Endothelial cell of umbilical vein (primary cell): ENCODE measurements at regions of chr3 and their contacts with region 1.

Region 1: GRCh38 chr3:157572559-157573270 is 69.5 kb upstream of the VEPH1 start:
- DNase-seq: peak; percentile 83
- H3K4me3 ChIP-seq: no peak overlapping the region
- H3K27ac ChIP-seq: no peak overlapping the region
- H3K4me1 ChIP-seq: no peaks in the 10 kb centered on the region
- H3K27me3 ChIP-seq: no peaks in the 10 kb centered on the region
- CTCF ChIP-seq: peak; percentile 71 to 75
- POLR2A ChIP-seq: no peak

Region 2: DNA sequence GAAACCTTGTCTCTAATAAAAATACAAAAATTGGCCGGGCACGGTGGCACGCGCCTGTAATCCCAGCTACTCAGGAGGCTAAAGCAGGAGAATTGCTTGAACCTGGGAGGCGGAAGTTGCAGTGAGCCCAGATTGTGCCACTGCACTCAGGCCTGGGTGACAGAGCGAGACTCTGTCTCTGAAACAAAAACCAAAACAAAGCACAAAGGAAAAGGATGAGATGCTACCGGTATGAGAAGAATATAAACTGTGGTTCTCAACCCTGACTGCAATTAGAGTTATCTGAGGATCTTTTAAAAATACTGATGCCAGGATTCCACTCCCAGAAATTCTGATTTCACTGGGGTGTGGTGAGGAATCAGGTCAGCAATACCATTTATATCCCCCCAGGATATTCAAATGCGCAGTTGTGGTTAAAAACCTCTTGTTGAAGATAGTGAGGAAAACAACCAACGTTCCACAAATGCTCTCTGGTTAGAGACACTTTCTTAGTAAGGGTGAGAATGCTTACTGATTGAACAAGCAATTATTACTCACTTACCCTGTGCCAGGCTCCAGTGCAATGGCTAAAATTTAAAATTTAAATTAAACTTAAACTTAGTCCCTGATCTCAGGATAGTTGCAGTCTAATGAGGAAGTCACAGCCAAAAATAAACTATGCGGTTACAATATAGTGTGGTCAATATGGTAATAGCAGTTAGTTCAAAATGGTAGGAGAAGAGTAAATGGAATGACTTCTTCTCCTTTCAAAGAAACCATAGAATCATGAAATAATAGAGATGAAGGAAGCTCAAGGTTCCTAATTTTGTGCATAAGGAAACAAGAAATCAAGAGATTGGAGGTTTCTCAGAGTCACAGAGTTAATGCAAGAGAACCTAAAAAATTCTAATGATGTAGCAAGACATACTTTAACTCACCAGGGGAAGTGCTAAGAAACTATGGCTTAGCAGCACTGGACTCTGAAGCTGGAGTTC is 1127.3 kb before region 1 on chr3:
- CTCF ChIA-PET with region 1: no interaction called
- POLR2A ChIA-PET with region 1: no interaction called
- dilution Hi-C with region 1: no loop called
- intact Hi-C with region 1: no loop called
- DNase-seq: no peak
- H3K4me3 ChIP-seq: no peak overlapping the region
- H3K27ac ChIP-seq: no peak overlapping the region
- H3K4me1 ChIP-seq: peaks cover 8% of the 10 kb centered on the region
- H3K27me3 ChIP-seq: no peaks in the 10 kb centered on the region
- CTCF ChIP-seq: no peak
- POLR2A ChIP-seq: no peak

Region 3: GRCh38 chr3:157354722-157355121 is 218.0 kb before region 1 on chr3:
- CTCF ChIA-PET with region 1: interaction called, 3 read pairs
- POLR2A ChIA-PET with region 1: no interaction called
- dilution Hi-C with region 1: no loop called
- intact Hi-C with region 1: loop called (anchors 10 kb)
- DNase-seq: peak; percentile 64
- H3K4me3 ChIP-seq: no peak overlapping the region
- H3K27ac ChIP-seq: peak overlapping the region; percentile 8
- H3K4me1 ChIP-seq: peaks cover 41% of the 10 kb centered on the region
- H3K27me3 ChIP-seq: no peaks in the 10 kb centered on the region
- CTCF ChIP-seq: peak; percentile 47 to 62
- POLR2A ChIP-seq: no peak

Region 4: DNA sequence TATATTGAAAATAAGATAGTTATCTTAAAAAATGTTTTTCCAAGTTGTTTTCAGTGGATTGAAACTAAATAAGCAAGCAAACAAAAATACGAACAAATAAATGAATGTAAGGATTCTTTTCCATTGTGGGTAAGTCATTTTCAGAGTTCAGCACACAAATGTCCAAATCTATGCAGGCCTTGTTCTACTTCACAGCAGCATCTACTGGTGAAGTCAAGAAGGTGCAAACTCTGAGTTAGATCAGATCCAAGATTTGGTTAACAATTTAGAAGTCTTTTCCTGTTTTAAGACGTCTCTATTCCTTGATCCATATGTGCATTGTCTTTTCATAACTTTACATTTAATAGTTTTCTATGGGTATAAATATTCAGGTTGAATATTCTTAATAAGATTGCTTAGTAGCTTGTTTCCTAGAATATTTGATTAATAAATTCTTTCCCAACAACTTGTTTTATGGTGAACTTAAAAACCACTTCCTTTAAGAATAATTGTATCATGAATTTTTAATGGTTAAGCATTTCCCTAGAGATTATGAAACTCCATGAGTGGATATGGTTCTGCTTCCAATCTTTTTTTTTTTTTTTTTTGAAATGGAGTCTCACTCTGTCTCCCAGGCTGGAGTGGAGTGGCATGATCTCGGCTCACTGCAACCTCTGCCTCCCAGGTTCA is 125.6 kb before region 1 on chr3:
- CTCF ChIA-PET with region 1: interaction called, 10 read pairs
- POLR2A ChIA-PET with region 1: no interaction called
- dilution Hi-C with region 1: no loop called
- intact Hi-C with region 1: loop called (anchors 5 kb)
- DNase-seq: peak; percentile 67
- H3K4me3 ChIP-seq: no peak overlapping the region
- H3K27ac ChIP-seq: no peak overlapping the region
- H3K4me1 ChIP-seq: peaks cover 34% of the 10 kb centered on the region
- H3K27me3 ChIP-seq: no peaks in the 10 kb centered on the region
- CTCF ChIP-seq: peak; percentile 47 to 54
- POLR2A ChIP-seq: no peak

Region 5: GRCh38 chr3:157493627-157494550 is 78.8 kb before region 1 on chr3:
- CTCF ChIA-PET with region 1: interaction called, 19 read pairs
- POLR2A ChIA-PET with region 1: no interaction called
- dilution Hi-C with region 1: no loop called
- intact Hi-C with region 1: loop called (anchors 2 kb)
- DNase-seq: peak; percentile 81
- H3K4me3 ChIP-seq: no peak overlapping the region
- H3K27ac ChIP-seq: peak overlapping the region; percentile 8
- H3K4me1 ChIP-seq: no peaks in the 10 kb centered on the region
- H3K27me3 ChIP-seq: no peaks in the 10 kb centered on the region
- CTCF ChIP-seq: peak; percentile 28 to 31
- POLR2A ChIP-seq: no peak

Region 6: GRCh38 chr3:157527131-157527881 is 45.4 kb before region 1 on chr3:
- CTCF ChIA-PET with region 1: interaction called, 457 read pairs
- POLR2A ChIA-PET with region 1: interaction called, 23 read pairs
- dilution Hi-C with region 1: no loop called
- intact Hi-C with region 1: loop called (anchors 1 kb)
- DNase-seq: no peak
- H3K4me3 ChIP-seq: no peak overlapping the region
- H3K27ac ChIP-seq: no peak overlapping the region
- H3K4me1 ChIP-seq: peaks cover 52% of the 10 kb centered on the region
- H3K27me3 ChIP-seq: no peaks in the 10 kb centered on the region
- CTCF ChIP-seq: no peak
- POLR2A ChIP-seq: no peak

Region 7: DNA sequence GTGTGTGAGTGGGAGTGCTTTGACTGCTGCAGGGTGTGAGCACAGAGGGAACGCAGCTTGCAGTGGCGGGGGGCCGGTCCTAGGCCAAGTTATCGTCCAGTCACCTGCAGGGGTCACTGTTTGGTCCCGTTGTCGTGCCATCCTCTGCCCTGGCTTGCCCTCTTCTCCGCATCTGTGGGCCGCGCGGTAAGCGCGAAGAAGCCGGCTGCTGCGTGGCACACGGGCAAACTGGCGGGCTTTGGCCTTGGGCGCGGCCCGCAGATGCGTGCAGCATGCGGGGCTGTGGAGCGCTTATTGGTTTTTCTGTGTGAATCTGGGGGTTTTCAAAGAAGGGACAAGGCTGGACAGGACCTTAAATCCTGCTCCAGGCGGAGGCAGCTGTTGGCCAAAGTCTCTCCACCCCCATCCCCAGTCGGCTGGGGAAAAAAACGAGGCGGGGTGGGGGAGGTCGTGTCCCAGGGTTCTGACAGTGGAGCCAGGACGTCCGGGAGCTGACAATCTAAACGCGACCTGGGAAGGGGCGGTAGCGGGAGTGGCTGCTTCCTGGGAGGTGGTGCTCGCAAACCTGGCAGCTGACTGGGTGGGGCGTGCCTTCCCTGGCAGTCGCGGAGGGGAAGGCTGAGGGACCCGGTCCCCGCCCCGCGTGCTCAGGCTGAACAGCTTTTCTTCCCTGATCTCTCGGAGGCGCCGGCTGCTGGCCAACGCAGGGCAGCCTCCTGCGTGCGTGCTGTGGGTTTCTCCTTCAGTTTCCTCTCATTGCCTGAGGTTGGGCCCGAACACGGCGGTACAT is 29.8 kb before region 1 on chr3:
- CTCF ChIA-PET with region 1: interaction called, 45 read pairs
- POLR2A ChIA-PET with region 1: interaction called, 3 read pairs
- dilution Hi-C with region 1: no loop called
- intact Hi-C with region 1: loop called (anchors 2 kb)
- DNase-seq: peak; percentile 61
- H3K4me3 ChIP-seq: peak overlapping the region; percentile 31 to 60 (median 42)
- H3K27ac ChIP-seq: no peak overlapping the region
- H3K4me1 ChIP-seq: peaks cover 4% of the 10 kb centered on the region
- H3K27me3 ChIP-seq: no peaks in the 10 kb centered on the region
- CTCF ChIP-seq: peak; percentile 32 to 62
- POLR2A ChIP-seq: peak; percentile 34

Region 8: DNA sequence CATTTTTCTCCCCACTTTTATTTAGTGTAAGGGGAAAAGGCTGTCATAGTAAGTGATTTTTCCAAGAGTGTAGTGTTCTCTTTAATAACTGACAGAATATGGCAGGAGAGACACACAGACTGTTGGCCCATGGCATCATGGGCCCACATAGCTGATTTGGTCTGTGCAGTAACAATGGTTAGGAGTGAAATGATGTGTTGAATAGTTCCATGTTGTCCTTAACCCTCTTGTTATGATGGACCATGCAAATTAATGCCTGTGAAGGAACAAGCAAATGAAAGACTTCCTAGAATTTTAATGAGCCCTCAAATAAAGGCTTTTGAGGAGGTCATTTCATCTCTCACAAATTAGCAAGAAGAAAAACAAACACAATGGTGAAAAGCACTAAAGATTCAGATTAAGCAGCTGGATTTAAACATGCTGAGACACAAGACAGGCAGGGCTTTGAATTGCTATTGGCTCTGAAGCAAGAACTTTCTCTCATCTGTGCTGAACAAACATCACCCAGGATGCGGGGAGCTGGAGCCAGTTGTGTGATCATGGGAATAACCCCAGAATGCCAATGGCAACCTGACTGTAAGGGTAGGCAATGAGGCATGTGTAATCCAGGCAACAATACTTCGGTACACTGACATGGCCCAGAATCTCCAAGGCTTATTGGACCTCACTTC is 67.2 kb after region 1 on chr3:
- CTCF ChIA-PET with region 1: no interaction called
- POLR2A ChIA-PET with region 1: no interaction called
- dilution Hi-C with region 1: no loop called
- intact Hi-C with region 1: no loop called
- DNase-seq: no peak
- H3K4me3 ChIP-seq: no peak overlapping the region
- H3K27ac ChIP-seq: no peak overlapping the region
- H3K4me1 ChIP-seq: no peaks in the 10 kb centered on the region
- H3K27me3 ChIP-seq: peaks cover 5 to 20% of the 10 kb centered on the region in 2 experiments
- CTCF ChIP-seq: no peak
- POLR2A ChIP-seq: no peak